ENCODE measurements at regions of chr16 and their contacts with region 1.

Region 1: DNA sequence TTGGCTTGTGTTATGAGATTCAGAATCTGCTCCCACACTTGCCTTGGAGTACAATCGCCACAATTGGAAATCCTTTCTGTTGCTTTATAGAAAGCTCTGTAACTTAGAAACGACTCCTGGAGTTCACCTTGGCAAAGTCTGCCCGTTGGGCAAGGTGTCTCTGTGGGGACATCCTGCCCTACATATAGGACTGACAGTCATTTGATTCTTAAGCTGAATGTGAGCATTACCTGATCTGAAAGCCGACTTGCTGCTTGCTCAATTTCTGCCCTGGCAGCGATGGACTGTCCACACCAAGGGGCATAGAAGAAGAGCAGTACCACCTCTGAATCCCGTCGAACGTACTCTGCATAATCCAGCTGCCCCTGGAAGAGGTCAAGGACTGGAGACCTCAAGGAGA is 6.9 kb downstream of the TXNDC11 start:
- DNase-seq: no peak
- H3K4me3 ChIP-seq: no peak overlapping the region
- H3K27ac ChIP-seq: peak overlapping the region; percentile 85
- H3K4me1 ChIP-seq: peaks cover 86% of the 10 kb centered on the region
- CTCF ChIP-seq: no peak

Region 2: GRCh38 chr16:11797166-11797956 is 61.6 kb after region 1 on chr16 and contains the start of gene ZC3H7A:
- CTCF ChIA-PET with region 1: no interaction called
- POLR2A ChIA-PET with region 1: interaction called, 10 read pairs
- intact Hi-C with region 1: no loop called
- DNase-seq: peak; percentile 98
- H3K4me3 ChIP-seq: peak within 1 kb of the TSS; percentile 92
- H3K27ac ChIP-seq: peak within 1 kb of the TSS; percentile 79
- H3K4me1 ChIP-seq: peaks cover 62% of the 10 kb centered on the region
- CTCF ChIP-seq: peak; percentile 66
- total RNA-seq, gene ZC3H7A: 28.6 and 32.1 TPM in 2 replicates

Region 3: DNA sequence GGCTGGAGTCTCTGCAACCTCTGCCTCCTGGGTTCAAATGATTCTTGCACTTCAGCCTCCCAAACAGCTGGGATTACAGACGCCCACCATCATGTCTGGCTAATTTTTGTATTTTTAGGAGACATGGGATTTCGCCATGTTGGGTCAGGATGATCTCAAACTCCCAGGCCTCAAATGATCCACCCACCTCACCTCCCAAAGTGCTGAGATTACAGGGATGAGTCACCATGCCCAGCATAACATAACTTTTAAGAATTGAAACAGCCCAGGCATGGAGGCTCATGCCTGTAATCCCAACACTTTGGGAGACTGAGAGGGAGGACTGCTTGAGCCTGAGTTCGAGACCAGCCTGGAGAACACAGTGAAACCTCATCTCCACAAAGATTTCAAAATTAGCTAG is 113.1 kb after region 1 on chr16:
- CTCF ChIA-PET with region 1: no interaction called
- POLR2A ChIA-PET with region 1: no interaction called
- intact Hi-C with region 1: no loop called
- DNase-seq: no peak
- H3K4me3 ChIP-seq: no peak overlapping the region
- H3K27ac ChIP-seq: no peak overlapping the region
- H3K4me1 ChIP-seq: peaks cover 32% of the 10 kb centered on the region
- CTCF ChIP-seq: no peak

Measured in OCI-LY7 (cell line).